Activated CD4-positive, alpha-beta memory T cell treated with anti-CD3 and anti-CD28 coated beads for 36 hours (primary cell): ENCODE measurements at regions of chr4 and their contacts with region 1.

Region 1: DNA sequence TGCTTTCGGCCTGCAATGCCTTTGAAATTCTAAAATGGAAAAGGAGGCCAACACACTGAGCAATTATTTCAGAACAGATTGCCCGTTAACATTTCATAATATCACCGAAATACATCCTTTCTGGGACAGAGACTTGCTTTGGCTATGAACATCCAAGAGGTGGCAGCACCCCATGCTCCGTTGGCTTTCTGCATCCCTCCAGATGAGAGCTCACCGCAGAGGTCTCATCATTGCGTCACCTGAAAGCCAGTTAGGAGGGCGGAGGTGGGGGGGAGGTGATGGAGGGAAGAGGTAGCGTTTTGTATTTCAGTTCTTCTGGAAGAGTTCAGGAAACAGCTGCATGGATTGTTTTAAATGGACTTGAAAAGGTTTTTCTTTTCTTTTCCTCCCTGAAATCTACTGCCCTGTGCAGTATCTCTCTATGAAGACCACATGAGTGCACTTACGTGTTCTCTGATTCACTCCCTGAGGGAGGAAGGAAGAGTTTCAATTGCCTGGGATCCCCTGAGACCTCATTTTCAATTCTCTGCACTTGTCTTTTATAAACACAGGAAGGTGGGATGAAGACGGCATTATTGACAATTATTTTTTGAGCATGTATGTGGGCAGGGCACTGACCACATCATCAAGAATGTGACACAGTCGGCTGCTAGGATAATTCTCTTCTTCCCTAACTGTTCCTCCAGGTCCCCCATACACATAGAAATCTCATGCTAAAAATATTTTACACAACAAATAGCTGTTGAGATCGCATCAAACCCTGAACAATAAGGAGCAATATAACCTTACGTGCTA is 166.9 kb upstream of the PGRMC2 start:
- DNase-seq: peak; percentile 79
- H3K4me3 Mint-ChIP-seq: peak overlapping the region; percentile 7
- H3K27ac Mint-ChIP-seq: no peak overlapping the region
- H3K4me1 Mint-ChIP-seq: peaks cover 9% of the 10 kb centered on the region
- H3K27me3 Mint-ChIP-seq: no peaks in the 10 kb centered on the region

Region 2: GRCh38 chr4:128191115-128191781 is 263.2 kb before region 1 on chr4:
- CTCF ChIA-PET with region 1: interaction called, 3 read pairs
- POLR2A ChIA-PET with region 1: no interaction called
- intact Hi-C with region 1: loop called (anchors 5 kb)
- DNase-seq: peak; percentile 80
- H3K4me3 Mint-ChIP-seq: no peak overlapping the region
- H3K27ac Mint-ChIP-seq: no peak overlapping the region
- H3K4me1 Mint-ChIP-seq: peaks cover 3% of the 10 kb centered on the region
- H3K27me3 Mint-ChIP-seq: no peaks in the 10 kb centered on the region

Region 3: GRCh38 chr4:128468123-128468989 is 13.9 kb after region 1 on chr4:
- CTCF ChIA-PET with region 1: interaction called, 13 read pairs
- POLR2A ChIA-PET with region 1: no interaction called
- intact Hi-C with region 1: no loop called
- DNase-seq: no peak
- H3K4me3 Mint-ChIP-seq: no peak overlapping the region
- H3K27ac Mint-ChIP-seq: no peak overlapping the region
- H3K4me1 Mint-ChIP-seq: no peaks in the 10 kb centered on the region
- H3K27me3 Mint-ChIP-seq: no peaks in the 10 kb centered on the region

Region 4: GRCh38 chr4:128553686-128554515 is 99.4 kb after region 1 on chr4:
- CTCF ChIA-PET with region 1: interaction called, 4 read pairs
- POLR2A ChIA-PET with region 1: no interaction called
- intact Hi-C with region 1: loop called (anchors 1 kb)
- DNase-seq: no peak
- H3K4me3 Mint-ChIP-seq: peak overlapping the region; percentile 84
- H3K27ac Mint-ChIP-seq: no peak overlapping the region
- H3K4me1 Mint-ChIP-seq: peaks cover 14% of the 10 kb centered on the region
- H3K27me3 Mint-ChIP-seq: peaks cover 12% of the 10 kb centered on the region

Region 5: GRCh38 chr4:128574706-128575105 is 120.2 kb after region 1 on chr4:
- CTCF ChIA-PET with region 1: interaction called, 4 read pairs
- POLR2A ChIA-PET with region 1: no interaction called
- intact Hi-C with region 1: loop called (anchors 5 kb)
- DNase-seq: peak; percentile 82
- H3K4me3 Mint-ChIP-seq: no peak overlapping the region
- H3K27ac Mint-ChIP-seq: no peak overlapping the region
- H3K4me1 Mint-ChIP-seq: no peaks in the 10 kb centered on the region
- H3K27me3 Mint-ChIP-seq: peaks cover 4% of the 10 kb centered on the region

Region 6: DNA sequence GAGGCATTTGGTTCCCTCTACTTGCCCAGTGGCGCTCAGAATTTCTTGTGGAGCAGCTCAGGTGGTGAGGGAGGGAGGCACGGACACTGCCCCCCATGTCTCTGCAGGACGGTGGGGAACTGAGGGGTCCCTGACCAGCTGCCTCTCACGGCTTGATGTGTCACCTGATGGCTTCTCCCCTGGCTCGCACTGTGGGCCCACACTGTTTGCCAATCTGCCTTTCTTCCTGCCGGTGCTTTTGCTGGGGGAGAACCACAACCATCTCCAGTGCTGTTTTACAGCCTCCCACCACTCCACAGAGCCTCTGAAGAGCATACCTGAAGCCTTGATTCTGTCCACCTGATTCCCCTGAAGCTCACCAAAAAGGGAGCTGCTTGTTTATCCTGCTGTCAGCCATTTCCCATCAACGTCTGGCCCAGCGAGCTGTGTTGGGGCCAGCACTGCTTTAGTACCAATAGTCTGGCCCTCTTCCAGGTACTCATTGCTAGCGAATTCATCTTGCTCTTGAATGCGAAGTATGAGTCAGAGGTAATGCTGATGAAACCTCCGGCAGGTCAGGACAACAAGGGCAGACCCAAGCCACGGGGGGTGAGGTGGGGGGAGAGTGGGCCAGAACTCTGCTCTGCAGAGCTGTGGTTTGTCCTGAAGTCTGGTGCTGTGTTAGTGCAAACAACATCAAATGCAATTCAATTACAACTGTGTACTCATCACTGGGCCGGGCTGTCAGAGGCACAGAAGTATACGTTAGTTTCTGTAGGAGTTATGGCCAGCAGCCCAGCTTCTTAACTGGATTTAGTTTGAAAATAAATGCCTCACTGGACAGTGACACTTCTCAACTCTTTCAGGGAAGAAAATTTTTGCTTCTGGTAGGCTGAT is 146.8 kb after region 1 on chr4:
- CTCF ChIA-PET with region 1: no interaction called
- POLR2A ChIA-PET with region 1: no interaction called
- intact Hi-C with region 1: no loop called
- DNase-seq: no peak
- H3K4me3 Mint-ChIP-seq: no peak overlapping the region
- H3K27ac Mint-ChIP-seq: no peak overlapping the region
- H3K4me1 Mint-ChIP-seq: no peaks in the 10 kb centered on the region
- H3K27me3 Mint-ChIP-seq: peaks cover 9% of the 10 kb centered on the region

Region 7: DNA sequence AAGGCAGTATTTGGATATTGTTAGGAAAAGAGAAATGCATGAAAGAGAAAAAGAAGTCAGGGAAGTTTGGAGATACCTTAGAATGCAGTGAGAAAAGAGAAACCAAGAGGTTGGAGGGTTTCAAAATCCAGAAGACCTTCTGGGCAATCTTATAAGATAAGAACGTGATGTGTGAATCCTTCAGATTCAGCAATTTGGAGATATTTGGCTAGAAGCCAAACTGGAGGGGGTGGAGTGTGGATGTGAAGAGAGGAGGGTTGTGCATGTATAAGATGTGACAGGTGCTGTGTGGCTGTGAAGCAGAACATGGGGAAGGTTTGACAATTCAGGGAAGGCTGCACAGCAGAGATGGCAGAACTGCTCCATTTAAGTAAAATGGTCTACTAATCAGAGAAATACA is 1048.0 kb after region 1 on chr4:
- CTCF ChIA-PET with region 1: no interaction called
- POLR2A ChIA-PET with region 1: no interaction called
- intact Hi-C with region 1: no loop called
- DNase-seq: no peak
- H3K4me3 Mint-ChIP-seq: no peak overlapping the region
- H3K27ac Mint-ChIP-seq: no peak overlapping the region
- H3K4me1 Mint-ChIP-seq: no peaks in the 10 kb centered on the region
- H3K27me3 Mint-ChIP-seq: no peaks in the 10 kb centered on the region